ENCODE measurements at regions of chr12 and their contacts with region 1.

Region 1: DNA sequence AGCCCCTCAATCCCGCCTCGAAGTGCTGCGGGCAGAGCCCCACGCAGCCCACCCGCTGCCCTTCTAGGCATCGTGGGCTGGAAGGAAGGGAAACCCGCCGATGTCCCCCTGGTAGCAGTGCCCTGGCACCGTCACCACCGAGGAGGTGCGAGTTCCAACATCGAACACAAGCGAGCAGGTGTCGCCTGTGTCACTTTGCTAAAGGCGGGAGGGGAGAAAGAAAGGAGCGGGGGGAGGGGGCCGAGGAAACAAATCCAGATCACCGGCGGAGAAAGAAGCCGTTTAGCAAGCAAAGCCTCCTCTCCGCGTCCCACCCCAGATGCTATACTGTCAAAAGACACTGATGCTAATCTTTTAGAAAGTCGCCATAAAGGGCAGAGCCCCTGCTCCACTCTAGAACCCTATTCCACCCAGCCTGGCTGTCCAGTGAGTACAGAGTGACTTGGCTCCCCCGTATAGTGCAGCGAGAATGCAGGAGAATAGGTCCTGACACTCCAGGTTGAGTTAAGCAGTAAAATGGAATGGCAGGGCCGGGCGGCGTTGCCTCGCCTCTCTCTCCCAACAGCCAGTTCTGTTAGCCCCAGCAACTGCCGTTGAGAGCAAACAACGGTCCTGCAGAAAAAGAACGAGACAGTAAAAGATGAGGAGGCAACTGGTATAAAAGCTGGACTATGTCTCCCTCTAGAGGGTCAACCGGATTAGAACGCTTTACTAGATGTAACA is 67.9 kb upstream of the USP15 start:
- DNase-seq: peak; percentile 62 to 79
- ATAC-seq: peak; percentile 90
- H3K4me3 ChIP-seq: peak overlapping the region; percentile 62 to 67
- H3K27ac ChIP-seq: no peak overlapping the region
- H3K4me1 ChIP-seq: no peaks in the 10 kb centered on the region
- H3K27me3 ChIP-seq: no peaks in the 10 kb centered on the region

Region 2: GRCh38 chr12:60684988-60685655 is 1507.2 kb before region 1 on chr12:
- intact Hi-C with region 1: loop called in 1 of 2 experiments (anchors 10 kb)
- DNase-seq: peak in 1 of 2 donors; percentile 53
- ATAC-seq: no peak
- H3K4me3 ChIP-seq: no peak overlapping the region
- H3K27ac ChIP-seq: no peak overlapping the region
- H3K4me1 ChIP-seq: no peaks in the 10 kb centered on the region
- H3K27me3 ChIP-seq: no peaks in the 10 kb centered on the region

Region 3: GRCh38 chr12:62006076-62006732 is 186.1 kb before region 1 on chr12:
- intact Hi-C with region 1: loop called in 1 of 2 experiments (anchors 5 kb)
- DNase-seq: no peak
- ATAC-seq: no peak
- H3K4me3 ChIP-seq: no peak overlapping the region
- H3K27ac ChIP-seq: no peak overlapping the region
- H3K4me1 ChIP-seq: no peaks in the 10 kb centered on the region
- H3K27me3 ChIP-seq: no peaks in the 10 kb centered on the region

Region 4: GRCh38 chr12:62396750-62397149 is 204.4 kb after region 1 on chr12:
- intact Hi-C with region 1: no loop called
- DNase-seq: no peak
- ATAC-seq: no peak
- H3K4me3 ChIP-seq: no peak overlapping the region
- H3K27ac ChIP-seq: no peak overlapping the region
- H3K4me1 ChIP-seq: no peaks in the 10 kb centered on the region
- H3K27me3 ChIP-seq: no peaks in the 10 kb centered on the region